Activated CD4-positive, alpha-beta T cell treated with anti-CD3 and anti-CD28 coated beads, Interleukin-2, amount 10 ng/mL, durations not matched to agents 24 days and 14 days (primary cell): ENCODE measurements at regions of chr11 and their contacts with region 1.

Region 1: DNA sequence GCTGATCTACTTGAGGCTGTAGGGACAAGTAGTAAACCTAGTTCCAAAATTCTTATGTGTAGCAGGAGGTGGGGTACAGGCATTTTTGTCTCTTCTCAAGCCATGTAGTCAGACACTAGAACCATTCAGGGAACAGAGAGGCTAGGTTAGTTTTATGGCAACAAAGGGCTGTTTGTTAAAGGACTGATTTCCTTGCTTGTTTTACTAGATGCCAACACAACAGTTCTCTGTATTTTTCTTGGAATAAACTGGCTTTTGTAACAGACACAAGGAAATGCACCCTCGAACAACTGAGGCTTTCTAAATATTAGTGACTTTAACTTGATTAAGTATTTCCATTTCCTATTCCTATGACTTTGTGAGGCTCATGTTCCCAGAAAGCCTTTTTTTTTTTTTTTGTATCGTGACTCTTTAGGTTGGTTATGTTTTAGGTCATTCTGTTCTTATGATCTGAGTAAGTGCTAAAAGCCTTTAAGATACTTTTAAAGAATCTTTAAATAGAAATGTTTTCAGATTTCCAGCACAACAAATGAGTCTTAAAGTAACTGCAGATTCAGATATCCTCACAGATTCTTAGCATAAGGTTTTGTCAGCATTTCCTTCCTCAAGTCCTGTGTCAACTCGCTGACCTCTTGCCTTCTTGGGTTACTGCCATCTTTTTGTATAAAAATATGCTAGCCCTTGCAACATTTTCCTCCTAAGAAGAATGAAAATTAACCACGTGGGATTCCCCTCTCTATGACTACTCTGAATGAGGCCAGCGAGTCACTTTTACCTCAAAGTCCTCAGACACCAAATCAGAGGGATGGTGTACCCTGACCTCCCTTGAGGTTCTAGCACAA is 92.5 kb downstream of the CCDC83 start:
- DNase-seq: peak; percentile 66
- H3K4me3 Mint-ChIP-seq: peak overlapping the region; percentile 62
- H3K27ac Mint-ChIP-seq: peak overlapping the region; percentile 94
- H3K4me1 Mint-ChIP-seq: peaks cover 39% of the 10 kb centered on the region
- H3K27me3 Mint-ChIP-seq: no peaks in the 10 kb centered on the region

Region 2: DNA sequence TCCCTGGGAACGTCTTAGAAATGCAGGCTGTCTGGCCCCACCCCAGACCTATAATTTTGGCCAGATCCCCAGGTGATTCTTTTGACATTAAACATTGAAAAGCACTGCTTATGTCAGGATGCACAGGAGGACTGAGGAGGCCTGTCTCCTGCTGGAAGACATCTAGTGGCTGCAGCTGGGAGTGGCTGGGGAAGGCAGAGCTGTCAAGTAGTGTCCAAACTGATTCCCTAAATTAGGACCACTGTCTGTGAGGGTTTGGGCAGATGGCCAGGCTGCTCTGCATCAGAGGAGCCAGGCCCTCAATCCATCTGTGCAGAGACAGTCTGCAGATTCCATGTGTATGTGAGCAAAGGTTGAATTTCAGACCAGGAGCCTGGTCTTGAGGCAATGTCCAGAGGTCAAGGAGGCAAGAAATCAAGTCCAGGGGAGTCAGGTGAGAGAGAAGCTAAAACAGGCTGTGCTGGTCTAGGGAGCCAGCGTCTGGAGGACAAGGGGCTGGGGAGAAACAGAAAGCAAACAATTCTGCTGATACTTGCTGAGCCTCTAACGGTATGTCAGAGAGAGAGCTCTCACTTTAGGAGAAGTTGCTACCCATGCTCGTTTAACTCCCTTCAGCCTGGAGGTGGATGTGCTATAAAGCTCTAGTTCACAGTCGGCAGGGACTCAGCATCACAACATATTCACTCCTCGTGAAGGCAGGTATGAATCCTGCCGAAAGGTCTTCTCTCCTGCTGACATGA is 121.4 kb before region 1 on chr11:
- intact Hi-C with region 1: loop called (anchors 1 kb)
- DNase-seq: peak; percentile 79
- H3K4me3 Mint-ChIP-seq: peak overlapping the region; percentile 66
- H3K27ac Mint-ChIP-seq: peak overlapping the region; percentile 67
- H3K4me1 Mint-ChIP-seq: peaks cover 66% of the 10 kb centered on the region
- H3K27me3 Mint-ChIP-seq: no peaks in the 10 kb centered on the region

Region 3: DNA sequence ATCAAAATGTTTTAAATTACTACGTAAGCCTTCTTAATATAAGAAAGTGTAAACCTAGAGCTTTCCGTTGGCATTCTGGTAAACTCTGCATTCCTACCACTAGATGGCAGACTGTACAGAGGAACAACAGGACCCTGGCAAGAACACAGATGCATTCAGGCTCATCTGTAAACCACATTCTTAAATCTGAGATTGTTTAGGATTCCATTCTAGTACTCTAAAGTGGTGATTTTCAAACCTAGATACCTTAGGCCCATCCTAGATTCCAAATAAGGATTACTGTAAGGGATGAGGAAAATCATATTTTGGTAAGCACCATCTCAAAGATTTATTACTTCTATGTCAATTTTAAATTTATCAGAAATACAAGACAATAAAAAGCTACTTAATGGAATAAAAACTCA is 94.3 kb after region 1 on chr11:
- intact Hi-C with region 1: loop called (anchors 1 kb)
- DNase-seq: peak; percentile 88
- H3K4me3 Mint-ChIP-seq: peak overlapping the region; percentile 45
- H3K27ac Mint-ChIP-seq: peak overlapping the region; percentile 73
- H3K4me1 Mint-ChIP-seq: peaks cover 57% of the 10 kb centered on the region
- H3K27me3 Mint-ChIP-seq: no peaks in the 10 kb centered on the region

Region 4: DNA sequence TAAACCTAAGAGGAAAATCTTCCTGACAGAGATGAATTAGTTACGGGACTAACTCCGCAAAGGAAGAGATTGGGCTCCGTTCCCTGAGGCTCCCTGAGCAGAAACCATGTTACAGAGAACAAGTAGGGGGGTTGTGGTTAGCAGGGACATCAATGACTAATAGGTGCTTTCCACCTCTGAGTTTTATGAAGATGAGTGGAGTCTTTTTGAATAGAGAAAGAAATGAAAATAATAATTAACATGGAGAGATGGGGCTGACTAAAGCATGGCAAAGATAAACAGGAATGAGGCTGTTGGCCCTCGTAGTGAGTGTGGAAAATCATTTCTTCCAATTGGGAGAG is 168.7 kb after region 1 on chr11:
- intact Hi-C with region 1: loop called (anchors 1 kb)
- DNase-seq: peak; percentile 70
- H3K4me3 Mint-ChIP-seq: peak overlapping the region; percentile 24
- H3K27ac Mint-ChIP-seq: peak overlapping the region; percentile 69
- H3K4me1 Mint-ChIP-seq: peaks cover 30% of the 10 kb centered on the region
- H3K27me3 Mint-ChIP-seq: peaks cover 2% of the 10 kb centered on the region

Region 5: DNA sequence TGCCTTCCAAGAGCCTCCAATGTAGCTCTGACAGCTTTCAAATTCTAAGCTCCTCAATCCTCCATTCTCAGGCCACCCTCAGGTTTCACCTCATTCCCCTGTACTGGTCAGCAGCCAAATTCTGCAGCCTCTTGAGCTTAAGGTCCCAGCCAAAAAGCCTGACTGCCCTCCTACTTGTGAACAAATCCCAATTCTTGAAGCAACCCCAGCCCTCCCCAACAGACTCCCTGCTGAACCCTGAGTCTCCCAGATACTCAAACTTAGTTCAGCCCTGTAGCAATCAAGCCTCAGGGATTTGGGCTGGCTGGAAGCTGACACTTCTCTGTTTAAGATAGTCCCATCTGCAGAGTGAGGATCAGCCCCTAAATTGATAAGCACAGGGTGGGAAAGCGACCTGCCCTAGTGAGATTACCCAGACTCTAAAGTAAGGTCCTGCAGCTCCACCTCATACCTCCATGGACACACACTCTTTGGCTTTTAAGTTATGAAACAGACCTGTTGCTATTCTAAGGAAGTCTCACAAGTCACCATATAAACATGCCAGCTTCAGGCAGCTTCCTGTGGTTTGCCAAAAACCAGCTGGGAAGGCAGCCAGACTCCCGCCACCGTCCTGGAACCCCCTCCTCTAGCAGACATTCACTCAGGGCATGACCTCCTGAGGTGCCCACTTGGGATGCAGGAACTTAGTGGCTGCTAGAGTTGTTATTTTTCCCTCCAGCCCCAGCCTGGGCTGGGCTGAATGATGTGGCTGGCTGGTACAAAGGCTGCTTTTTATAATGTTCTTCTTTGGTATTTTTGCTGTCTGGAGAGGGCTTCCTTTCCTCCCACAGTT is 203.7 kb after region 1 on chr11:
- intact Hi-C with region 1: no loop called
- DNase-seq: no peak
- H3K4me3 Mint-ChIP-seq: no peak overlapping the region
- H3K27ac Mint-ChIP-seq: no peak overlapping the region
- H3K4me1 Mint-ChIP-seq: peaks cover 19% of the 10 kb centered on the region
- H3K27me3 Mint-ChIP-seq: no peaks in the 10 kb centered on the region

Region 6: GRCh38 chr11:86418917-86419316 is 471.3 kb after region 1 on chr11:
- intact Hi-C with region 1: loop called (anchors 2 kb)
- DNase-seq: no peak
- H3K4me3 Mint-ChIP-seq: no peak overlapping the region
- H3K27ac Mint-ChIP-seq: no peak overlapping the region
- H3K4me1 Mint-ChIP-seq: peaks cover 9% of the 10 kb centered on the region
- H3K27me3 Mint-ChIP-seq: no peaks in the 10 kb centered on the region

Region 7: GRCh38 chr11:86592659-86593451 is 645.2 kb after region 1 on chr11:
- intact Hi-C with region 1: loop called (anchors 2 kb)
- DNase-seq: peak; percentile 94
- H3K4me3 Mint-ChIP-seq: peak overlapping the region; percentile 62
- H3K27ac Mint-ChIP-seq: peak overlapping the region; percentile 90
- H3K4me1 Mint-ChIP-seq: peaks cover 47% of the 10 kb centered on the region
- H3K27me3 Mint-ChIP-seq: no peaks in the 10 kb centered on the region

Region 8: DNA sequence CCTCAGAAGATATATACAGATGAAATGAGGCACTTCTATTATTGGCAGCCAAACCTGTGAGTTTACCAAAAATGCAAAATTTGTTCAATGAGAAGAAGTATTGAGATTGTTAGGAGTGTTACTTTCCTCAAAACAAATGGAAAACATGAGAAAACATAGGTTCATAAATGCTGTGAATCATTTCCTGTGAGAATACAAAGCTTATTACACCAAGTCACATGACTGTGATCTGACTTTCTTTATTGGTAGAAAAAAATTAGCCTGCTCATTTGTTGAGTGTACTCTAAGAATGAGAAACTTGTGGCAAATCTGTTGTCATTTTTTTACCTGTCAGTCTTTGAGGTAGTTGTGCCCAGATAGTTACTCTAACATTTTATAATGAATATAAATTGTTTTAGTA is 1305.2 kb after region 1 on chr11:
- intact Hi-C with region 1: loop called (anchors 5 kb)
- DNase-seq: no peak
- H3K4me3 Mint-ChIP-seq: no peak overlapping the region
- H3K27ac Mint-ChIP-seq: peak overlapping the region; percentile 68
- H3K4me1 Mint-ChIP-seq: peaks cover 14% of the 10 kb centered on the region
- H3K27me3 Mint-ChIP-seq: no peaks in the 10 kb centered on the region